Sigmoid colon (tissue), 7 donors: ENCODE measurements at regions of chr2 and their contacts with region 1.

Region 1: GRCh38 chr2:118046634-118047210 is 32.9 kb upstream of the CCDC93 start:
- DNase-seq: no peak
- H3K4me3 ChIP-seq: no peak overlapping the region
- H3K27ac ChIP-seq: no peak overlapping the region
- H3K4me1 ChIP-seq: peaks cover 0 to 3% (median 0%) of the 10 kb centered on the region in 4 donors
- H3K27me3 ChIP-seq: peaks cover 0 to 45% (median 13%) of the 10 kb centered on the region in 3 donors
- CTCF ChIP-seq: peak in 3 of 4 experiments; percentile 21 to 56 (median 40)
- EP300 ChIP-seq: no peak
- POLR2A ChIP-seq: no peak

Region 2: GRCh38 chr2:118865106-118865505 is 818.4 kb after region 1 on chr2:
- intact Hi-C with region 1: loop called (anchors 2 kb)
- DNase-seq: no peak
- H3K4me3 ChIP-seq: no peak overlapping the region
- H3K27ac ChIP-seq: no peak overlapping the region
- H3K4me1 ChIP-seq: no peaks in the 10 kb centered on the region
- H3K27me3 ChIP-seq: peaks cover 0 to 42% (median 0%) of the 10 kb centered on the region in 3 donors
- CTCF ChIP-seq: peak in 1 of 4 experiments; percentile 19
- EP300 ChIP-seq: no peak
- POLR2A ChIP-seq: no peak